AG04450 (cell line): ENCODE measurements at regions of chr18 and their contacts with region 1.

Region 1: DNA sequence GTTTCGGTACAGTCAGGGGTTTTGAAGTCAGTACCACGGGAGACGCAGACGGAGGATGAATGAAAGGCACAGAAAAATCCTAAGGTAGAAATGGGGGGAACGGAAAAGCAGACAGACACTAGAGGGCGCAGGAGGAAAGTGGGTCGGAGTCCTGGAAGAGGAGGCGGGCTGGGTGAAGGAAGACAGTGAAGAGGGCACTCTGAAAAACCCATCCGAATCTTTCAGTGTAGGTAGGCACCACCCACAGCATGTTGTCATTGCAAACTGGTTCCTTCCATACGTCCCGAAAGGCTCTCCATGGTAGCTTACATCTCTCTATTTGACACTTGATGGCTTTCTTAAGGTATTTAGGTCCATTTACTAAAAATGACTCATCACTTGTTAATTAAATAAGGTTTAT is 18.5 kb upstream of the ZNF236 start:
- DNase-seq: no peak
- H3K4me3 ChIP-seq: peak overlapping the region; percentile 38; the same call in 1 of the 2 replicates
- H3K27ac ChIP-seq: no peak overlapping the region
- H3K27me3 ChIP-seq: peaks cover 6% of the 10 kb centered on the region
- CTCF ChIP-seq: peak; percentile 94

Region 2: GRCh38 chr18:76538846-76539245 is 265.0 kb before region 1 on chr18:
- CTCF ChIA-PET with region 1: no interaction called
- POLR2A ChIA-PET with region 1: no interaction called
- DNase-seq: no peak
- H3K4me3 ChIP-seq: no peak overlapping the region
- H3K27ac ChIP-seq: no peak overlapping the region
- H3K27me3 ChIP-seq: no peaks in the 10 kb centered on the region
- CTCF ChIP-seq: no peak

Region 3: DNA sequence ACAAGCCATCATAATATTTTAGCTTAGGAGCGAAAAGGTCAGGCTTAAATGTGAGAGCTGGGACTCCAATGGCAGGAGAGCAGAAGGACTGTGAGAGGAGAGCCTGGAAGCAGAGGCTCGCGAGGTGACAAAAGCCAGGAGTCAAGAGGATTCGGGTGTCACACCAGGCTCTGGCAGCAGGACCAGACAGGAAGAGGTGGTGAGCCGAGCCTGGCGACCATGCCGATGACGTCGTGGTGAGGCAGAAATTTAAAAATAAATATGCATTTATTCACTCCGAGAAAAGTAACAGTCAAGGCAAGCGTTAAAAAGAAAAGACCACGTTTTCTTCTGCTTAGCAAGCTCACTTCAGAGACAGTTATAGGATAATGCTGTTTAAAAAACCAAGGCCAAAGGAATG is 12.7 kb before region 1 on chr18:
- CTCF ChIA-PET with region 1: interaction called, 62 read pairs
- POLR2A ChIA-PET with region 1: no interaction called
- DNase-seq: no peak
- H3K4me3 ChIP-seq: no peak overlapping the region
- H3K27ac ChIP-seq: no peak overlapping the region
- H3K27me3 ChIP-seq: no peaks in the 10 kb centered on the region
- CTCF ChIP-seq: no peak

Region 4: GRCh38 chr18:76847916-76848315 is 44.1 kb after region 1 on chr18:
- CTCF ChIA-PET with region 1: interaction called, 21 read pairs
- POLR2A ChIA-PET with region 1: no interaction called
- DNase-seq: no peak
- H3K4me3 ChIP-seq: no peak overlapping the region
- H3K27ac ChIP-seq: no peak overlapping the region
- H3K27me3 ChIP-seq: no peaks in the 10 kb centered on the region
- CTCF ChIP-seq: peak; percentile 32; the same call in 1 of the 2 replicates

Region 5: DNA sequence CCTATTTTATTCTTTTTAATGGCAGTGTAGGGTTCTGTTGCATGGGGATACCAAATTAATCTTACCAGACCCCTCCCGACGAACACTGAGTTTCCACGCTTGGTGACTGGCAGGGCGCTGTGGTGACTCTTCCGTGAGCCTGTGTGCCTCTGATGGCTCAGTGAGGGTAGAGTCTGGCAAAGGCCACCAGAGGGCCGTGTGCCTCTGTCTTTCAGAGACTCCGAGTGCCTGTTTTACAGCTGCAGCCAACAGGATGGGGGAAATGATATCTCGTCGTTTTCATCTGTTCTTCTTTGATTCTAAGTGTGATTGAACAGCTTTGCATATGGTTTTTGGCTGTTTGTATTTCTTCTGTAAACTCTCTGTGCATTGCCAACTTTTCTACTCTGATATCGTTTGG is 118.3 kb after region 1 on chr18:
- CTCF ChIA-PET with region 1: interaction called, 12 read pairs
- POLR2A ChIA-PET with region 1: no interaction called
- DNase-seq: peak; percentile 10
- H3K4me3 ChIP-seq: no peak overlapping the region
- H3K27ac ChIP-seq: no peak overlapping the region
- H3K27me3 ChIP-seq: no peaks in the 10 kb centered on the region
- CTCF ChIP-seq: peak; percentile 72

Region 6: GRCh38 chr18:77207540-77207939 is 403.7 kb after region 1 on chr18:
- CTCF ChIA-PET with region 1: interaction called, 10 read pairs
- POLR2A ChIA-PET with region 1: no interaction called
- DNase-seq: peak; percentile 27
- H3K4me3 ChIP-seq: no peak overlapping the region
- H3K27ac ChIP-seq: peak overlapping the region; percentile 11
- H3K27me3 ChIP-seq: no peaks in the 10 kb centered on the region
- CTCF ChIP-seq: peak; percentile 71